A549 (cell line): ENCODE measurements at regions of chr2 and their contacts with region 1.

Region 1: DNA sequence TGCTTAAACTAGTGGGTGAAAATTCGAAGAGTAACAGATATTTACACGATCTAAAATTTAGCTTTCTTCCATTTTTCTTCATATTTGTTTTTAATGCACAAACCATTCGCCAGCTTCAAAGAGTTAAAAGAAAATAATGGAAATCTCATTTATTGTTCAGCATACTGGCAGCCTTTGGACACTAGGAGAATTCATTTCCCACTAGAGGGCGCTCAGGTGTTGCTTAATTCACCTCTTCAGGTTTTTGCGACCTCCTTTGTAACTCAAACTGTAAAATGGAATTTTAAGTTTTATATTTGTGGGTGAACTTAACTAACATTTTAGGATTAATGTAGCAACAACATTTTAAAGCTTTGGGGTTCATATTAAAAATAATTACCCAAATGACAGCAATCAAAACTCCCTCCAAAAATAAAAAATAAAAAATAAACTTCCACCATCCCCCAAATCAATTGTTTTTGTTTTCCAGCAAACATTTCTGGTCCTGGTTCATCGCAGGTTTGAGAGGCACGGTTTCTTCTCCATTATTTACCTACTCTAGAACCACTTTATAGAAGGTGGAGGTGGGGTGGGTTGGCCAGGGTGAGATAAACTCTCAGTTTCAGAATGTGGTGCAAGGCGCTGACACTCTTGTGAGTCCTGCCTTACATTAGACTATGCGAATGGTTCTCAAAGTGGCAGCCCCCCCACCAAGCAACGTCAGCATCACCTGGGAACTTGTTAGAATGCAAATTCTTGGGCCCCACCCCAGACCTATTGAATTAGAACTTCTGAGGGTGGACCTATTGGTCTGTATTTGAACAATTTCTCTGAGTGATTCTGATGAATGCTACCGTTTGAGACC is 24.7 kb upstream of the PNPT1 start:
- DNase-seq: peak; percentile 58 to 71
- ATAC-seq: peak; percentile 74 to 92; a peak in 5 of 6 replicates
- H3K4me3 ChIP-seq: no peak overlapping the region
- H3K27ac ChIP-seq: peak overlapping the region in 1 of 2 experiments; percentile 41; a peak in 3 of 6 replicates
- H3K4me1 ChIP-seq: 0 out of 3 replicates have a peak, but pooled peaks cover 2% of the 10 kb centered on the region
- CTCF ChIP-seq: peak; percentile 99
- EP300 ChIP-seq: no peak
- POLR2A ChIP-seq: no peak
- RAD21 ChIP-seq: peak; percentile 98

Region 2: GRCh38 chr2:55707751-55708150 is 10.6 kb before region 1 on chr2:
- CTCF ChIA-PET with region 1: interaction called, 30 read pairs
- POLR2A ChIA-PET with region 1: no interaction called
- DNase-seq: no peak
- ATAC-seq: no peak; a peak in 1 of 6 replicates
- H3K4me3 ChIP-seq: no peak overlapping the region
- H3K27ac ChIP-seq: no peak overlapping the region
- H3K4me1 ChIP-seq: no peaks in the 10 kb centered on the region
- CTCF ChIP-seq: no peak
- EP300 ChIP-seq: no peak
- POLR2A ChIP-seq: no peak
- RAD21 ChIP-seq: no peak

Region 3: DNA sequence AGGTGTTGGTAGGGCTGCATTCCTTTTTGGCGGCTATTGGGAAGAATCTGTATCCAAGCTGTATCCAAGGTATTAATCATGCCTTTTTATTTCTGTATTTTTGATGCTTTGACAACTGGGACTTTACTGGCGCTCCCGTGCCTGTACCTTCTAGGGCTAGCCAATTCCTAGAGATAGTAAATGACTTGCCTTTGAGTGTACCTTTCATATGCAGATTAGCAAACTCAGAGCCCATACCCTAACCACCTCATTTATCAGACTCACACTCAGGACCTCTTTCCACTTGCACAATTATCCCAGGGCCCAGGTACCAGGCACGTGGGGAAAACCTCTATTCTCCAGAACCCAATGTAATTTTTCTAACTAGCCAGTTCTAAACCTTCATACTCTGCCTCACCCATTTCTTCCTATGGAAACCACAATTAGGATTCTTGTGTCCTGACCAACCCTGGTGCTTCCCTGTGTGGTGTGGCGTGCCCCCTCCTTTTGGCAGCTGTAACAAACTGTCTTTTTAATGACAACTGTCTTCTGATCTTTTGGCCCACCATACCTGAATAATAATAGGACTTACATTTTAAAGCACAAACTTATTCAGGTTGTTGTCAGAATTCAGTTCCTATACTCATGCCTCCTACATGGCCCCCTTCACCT is 41.0 kb after region 1 on chr2:
- CTCF ChIA-PET with region 1: interaction called, 14 read pairs
- POLR2A ChIA-PET with region 1: no interaction called
- DNase-seq: no peak
- ATAC-seq: no peak
- H3K4me3 ChIP-seq: no peak overlapping the region
- H3K27ac ChIP-seq: no peak overlapping the region
- H3K4me1 ChIP-seq: no peaks in the 10 kb centered on the region
- CTCF ChIP-seq: no peak
- EP300 ChIP-seq: no peak
- POLR2A ChIP-seq: no peak
- RAD21 ChIP-seq: no peak

Region 4: GRCh38 chr2:55804535-55804934 is 86.1 kb after region 1 on chr2:
- CTCF ChIA-PET with region 1: no interaction called
- POLR2A ChIA-PET with region 1: no interaction called
- DNase-seq: no peak
- ATAC-seq: no peak
- H3K4me3 ChIP-seq: no peak overlapping the region
- H3K27ac ChIP-seq: 0 out of 6 replicates have a peak overlapping the region, but pooled peaks of 1 of the 2 experiments have one; percentile 22
- H3K4me1 ChIP-seq: peaks cover 25% of the 10 kb centered on the region
- CTCF ChIP-seq: no peak
- EP300 ChIP-seq: no peak
- POLR2A ChIP-seq: no peak
- RAD21 ChIP-seq: no peak

Region 5: GRCh38 chr2:55992465-55992864 is 274.1 kb after region 1 on chr2:
- CTCF ChIA-PET with region 1: interaction called, 12 read pairs
- POLR2A ChIA-PET with region 1: no interaction called
- DNase-seq: peak; percentile 30 to 88
- ATAC-seq: peak; percentile 86 to 97
- H3K4me3 ChIP-seq: no peak overlapping the region
- H3K27ac ChIP-seq: peak overlapping the region; percentile 57 to 75
- H3K4me1 ChIP-seq: peaks cover 40% of the 10 kb centered on the region
- CTCF ChIP-seq: no peak
- EP300 ChIP-seq: peak; percentile 72 to 92; a peak in 4 of 5 replicates
- POLR2A ChIP-seq: no peak
- RAD21 ChIP-seq: peak; percentile 2 to 26; a peak in 1 of 5 replicates

Region 6: GRCh38 chr2:56047136-56047535 is 328.7 kb after region 1 on chr2:
- CTCF ChIA-PET with region 1: interaction called, 12 read pairs
- POLR2A ChIA-PET with region 1: no interaction called
- DNase-seq: no peak
- ATAC-seq: no peak
- H3K4me3 ChIP-seq: no peak overlapping the region
- H3K27ac ChIP-seq: no peak overlapping the region
- H3K4me1 ChIP-seq: no peaks in the 10 kb centered on the region
- CTCF ChIP-seq: no peak
- EP300 ChIP-seq: no peak
- POLR2A ChIP-seq: no peak
- RAD21 ChIP-seq: no peak

Region 7: GRCh38 chr2:56130463-56131070 is 412.2 kb after region 1 on chr2:
- CTCF ChIA-PET with region 1: interaction called, 48 read pairs
- POLR2A ChIA-PET with region 1: no interaction called
- DNase-seq: peak; percentile 18 to 48
- ATAC-seq: peak; percentile 80 to 90
- H3K4me3 ChIP-seq: no peak overlapping the region
- H3K27ac ChIP-seq: no peak overlapping the region
- H3K4me1 ChIP-seq: no peaks in the 10 kb centered on the region
- CTCF ChIP-seq: peak; percentile 73
- EP300 ChIP-seq: no peak
- POLR2A ChIP-seq: no peak
- RAD21 ChIP-seq: peak; percentile 49 to 57; a peak in 4 of 5 replicates